H1 (cell line): ENCODE measurements at regions of chr20 and their contacts with region 1.

Region 1: GRCh38 chr20:8790442-8791074 is 278.3 kb upstream of the PLCB4 start:
- DNase-seq: no peak
- H3K4me3 ChIP-seq: no peak overlapping the region
- H3K27ac ChIP-seq: no peak overlapping the region
- H3K4me1 ChIP-seq: no peaks in the 10 kb centered on the region; a peak in 1 of 7 replicates
- H3K27me3 ChIP-seq: no peaks in the 10 kb centered on the region
- CTCF ChIP-seq: peak in 2 of 3 experiments; percentile 68 to 85; a peak in 3 of 4 replicates
- EP300 ChIP-seq: no peak
- POLR2A ChIP-seq: no peak
- RAD21 ChIP-seq: peak; percentile 87 to 90

Region 2: GRCh38 chr20:8756410-8756809 is 34.1 kb before region 1 on chr20:
- CTCF ChIA-PET with region 1: interaction called, 11 read pairs
- POLR2A ChIA-PET with region 1: no interaction called
- DNase-seq: no peak
- H3K4me3 ChIP-seq: no peak overlapping the region
- H3K27ac ChIP-seq: no peak overlapping the region
- H3K4me1 ChIP-seq: no peaks in the 10 kb centered on the region
- H3K27me3 ChIP-seq: no peaks in the 10 kb centered on the region
- CTCF ChIP-seq: no peak
- EP300 ChIP-seq: no peak
- POLR2A ChIP-seq: no peak
- RAD21 ChIP-seq: no peak

Region 3: GRCh38 chr20:8777911-8778310 is 12.6 kb before region 1 on chr20:
- CTCF ChIA-PET with region 1: interaction called, 10 read pairs
- POLR2A ChIA-PET with region 1: no interaction called
- DNase-seq: no peak
- H3K4me3 ChIP-seq: no peak overlapping the region
- H3K27ac ChIP-seq: no peak overlapping the region
- H3K4me1 ChIP-seq: peaks cover 0 to 2% (median 0%) of the 10 kb centered on the region in 4 experiments; a peak in 2 of 7 replicates
- H3K27me3 ChIP-seq: no peaks in the 10 kb centered on the region
- CTCF ChIP-seq: no peak
- EP300 ChIP-seq: no peak
- POLR2A ChIP-seq: no peak
- RAD21 ChIP-seq: no peak

Region 4: DNA sequence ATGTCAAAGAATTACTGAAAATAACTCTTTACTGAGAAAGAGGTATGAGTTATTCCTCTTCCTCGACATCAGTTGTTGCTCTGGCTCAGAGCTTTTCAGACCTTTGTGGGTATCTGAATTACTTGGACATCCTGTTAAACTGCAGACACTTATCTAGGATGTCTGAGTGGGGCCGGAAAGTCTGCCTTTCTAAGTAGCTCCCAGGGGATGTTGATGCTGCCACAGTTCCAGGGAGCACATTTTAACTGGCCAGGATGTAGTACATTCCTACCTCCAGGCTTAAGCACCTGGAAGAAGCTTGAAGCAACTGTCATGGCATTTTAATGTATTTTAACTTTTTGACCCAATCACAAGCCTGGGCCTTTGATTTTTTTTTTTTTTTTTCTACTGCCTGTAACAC is 12.5 kb after region 1 on chr20:
- CTCF ChIA-PET with region 1: interaction called, 13 read pairs
- POLR2A ChIA-PET with region 1: no interaction called
- DNase-seq: no peak
- H3K4me3 ChIP-seq: no peak overlapping the region
- H3K27ac ChIP-seq: no peak overlapping the region
- H3K4me1 ChIP-seq: peaks cover 2 to 7% (median 4%) of the 10 kb centered on the region in 4 experiments; a peak in 4 of 7 replicates
- H3K27me3 ChIP-seq: no peaks in the 10 kb centered on the region
- CTCF ChIP-seq: no peak
- EP300 ChIP-seq: no peak
- POLR2A ChIP-seq: no peak
- RAD21 ChIP-seq: no peak

Region 5: DNA sequence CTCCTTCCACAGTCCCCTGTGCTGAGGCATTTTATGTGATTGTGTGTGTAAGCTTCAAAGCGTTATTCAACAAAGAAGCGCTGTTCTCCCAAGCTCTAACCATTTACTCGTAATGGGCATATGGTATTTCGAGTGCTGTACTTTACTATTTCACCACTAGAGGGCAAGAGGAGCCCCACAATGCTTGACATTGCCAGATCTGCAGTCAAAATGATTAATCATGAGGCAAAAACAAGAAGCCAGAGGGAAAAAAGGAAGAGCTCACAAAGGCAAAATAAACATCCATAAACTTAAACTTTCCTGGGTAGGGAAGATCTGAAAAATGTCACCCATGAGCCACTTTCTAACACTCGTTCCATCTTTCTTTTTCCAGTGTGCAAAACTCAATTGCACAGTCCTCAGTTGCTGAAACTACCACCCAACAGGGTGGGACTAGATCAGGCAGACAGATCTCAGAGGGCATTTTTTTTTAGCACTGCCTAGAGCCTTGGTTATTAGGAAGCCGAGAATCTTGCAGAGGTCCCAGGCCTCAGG is 63.3 kb after region 1 on chr20:
- CTCF ChIA-PET with region 1: interaction called, 13 read pairs
- POLR2A ChIA-PET with region 1: no interaction called
- DNase-seq: no peak
- H3K4me3 ChIP-seq: no peak overlapping the region
- H3K27ac ChIP-seq: no peak overlapping the region
- H3K4me1 ChIP-seq: peaks cover 0 to 3% (median 0%) of the 10 kb centered on the region in 4 experiments; a peak in 2 of 7 replicates
- H3K27me3 ChIP-seq: no peaks in the 10 kb centered on the region
- CTCF ChIP-seq: peak in 2 of 3 experiments; percentile 74 to 90; a peak in 3 of 4 replicates
- EP300 ChIP-seq: no peak
- POLR2A ChIP-seq: no peak
- RAD21 ChIP-seq: peak; percentile 91 to 92